Activated CD4-positive, alpha-beta T cell treated with anti-CD3 and anti-CD28 coated beads for 36 hours (primary cell): ENCODE measurements at regions of chr3 and their contacts with region 1.

Region 1: GRCh38 chr3:170117134-170117533 is 64.4 kb downstream of the PHC3 start:
- DNase-seq: no peak
- ATAC-seq: no peak
- H3K4me3 Mint-ChIP-seq: no peak overlapping the region
- H3K27ac Mint-ChIP-seq: peak overlapping the region; percentile 34
- H3K4me1 Mint-ChIP-seq: no peaks in the 10 kb centered on the region
- H3K27me3 Mint-ChIP-seq: no peaks in the 10 kb centered on the region

Region 2: GRCh38 chr3:170098753-170099152 is 18.4 kb before region 1 on chr3:
- CTCF ChIA-PET with region 1: interaction called, 14 read pairs
- POLR2A ChIA-PET with region 1: interaction called, 4 read pairs
- intact Hi-C with region 1: no loop called
- DNase-seq: no peak
- ATAC-seq: peak; percentile 86
- H3K4me3 Mint-ChIP-seq: no peak overlapping the region
- H3K27ac Mint-ChIP-seq: peak overlapping the region; percentile 85
- H3K4me1 Mint-ChIP-seq: peaks cover 26% of the 10 kb centered on the region
- H3K27me3 Mint-ChIP-seq: no peaks in the 10 kb centered on the region